CD8-positive, alpha-beta memory T cell (primary cell): ENCODE measurements at regions of chr11 and their contacts with region 1.

Region 1: GRCh38 chr11:587978-588380 is 11.7 kb downstream of the PHRF1 start:
- DNase-seq: peak; percentile 55 to 88 (median 81)
- H3K4me3 ChIP-seq: no peak overlapping the region
- H3K4me3 Mint-ChIP-seq: peak overlapping the region; percentile 60 to 89 (median 80)
- H3K27ac ChIP-seq: peak overlapping the region; percentile 46
- H3K27ac Mint-ChIP-seq: peak overlapping the region; percentile 97 to 100 (median 100)
- H3K4me1 ChIP-seq: peaks cover 22% of the 10 kb centered on the region
- H3K4me1 Mint-ChIP-seq: peaks cover 21 to 38% (median 32%) of the 10 kb centered on the region in 3 donors
- H3K27me3 ChIP-seq: no peaks in the 10 kb centered on the region
- H3K27me3 Mint-ChIP-seq: no peaks in the 10 kb centered on the region

Region 2: DNA sequence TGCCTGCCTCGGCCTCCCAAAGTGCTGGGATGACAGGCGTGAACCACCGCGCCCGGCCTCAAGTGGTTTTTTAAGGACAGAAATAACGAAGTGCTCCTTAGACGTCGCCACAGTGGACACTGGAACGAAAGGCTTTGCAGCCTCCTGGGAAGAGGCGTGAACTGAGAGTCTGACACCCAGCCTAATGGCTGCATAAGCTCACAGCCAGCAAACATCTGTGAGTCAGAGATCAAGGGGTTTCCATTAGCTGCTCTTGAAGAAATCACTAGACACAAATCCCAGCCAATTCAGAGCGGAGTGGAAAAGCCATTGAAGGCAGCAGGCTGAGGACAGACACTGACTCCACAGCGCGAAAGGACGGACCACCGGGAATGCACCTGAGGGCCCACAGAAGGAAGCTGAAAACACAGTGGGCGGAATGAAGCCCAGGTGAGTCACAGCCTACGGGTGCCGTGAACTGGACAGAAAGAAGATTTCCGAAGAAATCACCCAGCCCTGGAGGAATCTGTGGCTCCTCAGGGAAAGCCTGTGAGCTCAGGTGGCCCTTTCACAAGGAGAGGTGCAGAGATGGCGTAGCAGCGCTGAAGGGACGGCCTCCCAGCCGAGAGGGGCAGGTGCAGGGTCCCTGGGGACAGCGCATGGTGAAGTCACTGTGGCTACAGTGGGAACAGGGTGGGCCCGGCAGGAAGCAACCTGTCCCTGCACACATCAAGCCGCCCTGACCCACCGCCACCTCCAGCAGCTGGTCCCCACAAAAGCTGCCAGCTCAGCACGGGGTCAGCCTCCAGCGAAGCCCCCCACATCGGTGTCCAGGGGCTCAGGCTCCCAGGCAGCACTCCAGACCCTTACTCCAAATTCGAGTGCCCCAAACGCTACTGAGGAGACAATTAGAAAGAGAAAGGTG is 39.0 kb before region 1 on chr11:
- CTCF ChIA-PET with region 1: no interaction called
- POLR2A ChIA-PET with region 1: no interaction called
- DNase-seq: peak in 1 of 5 donors; percentile 42
- H3K4me3 ChIP-seq: no peak overlapping the region
- H3K4me3 Mint-ChIP-seq: no peak overlapping the region
- H3K27ac ChIP-seq: no peak overlapping the region
- H3K27ac Mint-ChIP-seq: no peak overlapping the region
- H3K4me1 ChIP-seq: peaks cover 3% of the 10 kb centered on the region
- H3K4me1 Mint-ChIP-seq: no peaks in the 10 kb centered on the region
- H3K27me3 ChIP-seq: no peaks in the 10 kb centered on the region
- H3K27me3 Mint-ChIP-seq: no peaks in the 10 kb centered on the region

Region 3: DNA sequence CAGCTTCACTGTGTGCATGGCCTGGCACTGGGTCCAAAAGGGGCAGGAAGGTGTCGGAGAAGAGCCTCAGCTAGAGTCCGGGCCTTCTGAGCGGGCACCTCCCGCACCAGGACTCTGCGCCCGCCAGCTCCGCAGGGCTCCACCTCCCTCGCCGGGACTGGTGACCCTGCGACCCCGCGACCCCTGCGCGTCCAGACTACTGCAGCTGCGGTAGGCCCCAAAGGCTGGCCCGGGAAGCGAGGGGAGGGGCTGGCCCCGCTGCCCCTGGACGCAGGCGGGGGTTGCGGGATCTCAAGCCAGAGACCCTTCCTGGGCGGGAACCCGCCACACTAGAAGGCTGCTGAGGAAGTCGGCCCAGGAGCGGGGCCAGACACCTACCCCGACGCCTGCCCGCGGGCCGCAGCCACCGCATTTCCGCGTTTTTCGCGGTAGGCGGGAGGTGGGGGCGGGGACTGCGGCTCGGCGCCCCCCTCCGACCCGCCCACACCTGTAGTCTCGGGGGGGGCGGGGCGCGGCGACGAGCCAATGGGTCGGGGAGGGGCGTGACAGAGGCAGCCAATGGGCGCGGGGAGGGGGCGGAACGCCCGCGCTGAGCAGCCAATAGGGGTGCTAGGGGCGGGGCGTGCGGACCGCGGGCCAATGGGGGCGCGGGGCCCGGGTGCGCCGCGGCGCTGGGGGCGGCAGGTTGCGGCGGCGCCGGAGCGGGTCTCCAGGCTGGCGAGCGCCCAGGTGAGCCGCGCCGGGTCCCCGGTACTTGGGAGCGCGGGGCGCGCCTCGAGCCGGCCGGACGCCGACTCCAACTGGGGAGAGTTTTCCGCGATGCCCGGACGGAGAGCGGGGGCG is 27.5 kb before region 1 on chr11 and contains the starts of genes LMNTD2 and RASSF7:
- CTCF ChIA-PET with region 1: interaction called, 4 read pairs
- POLR2A ChIA-PET with region 1: interaction called, 10 read pairs
- DNase-seq: peak; percentile 90 to 96 (median 92)
- H3K4me3 ChIP-seq: peak within 1 kb of the TSS; percentile 76
- H3K4me3 Mint-ChIP-seq: peak within 1 kb of the TSS; percentile 86 to 93 (median 90)
- H3K27ac ChIP-seq: peak within 1 kb of the TSS; percentile 74
- H3K27ac Mint-ChIP-seq: peak within 1 kb of the TSS; percentile 79 to 94 (median 86)
- H3K4me1 ChIP-seq: peaks cover 18% of the 10 kb centered on the region
- H3K4me1 Mint-ChIP-seq: peaks cover 10 to 27% (median 10%) of the 10 kb centered on the region in 3 donors
- H3K27me3 ChIP-seq: no peaks in the 10 kb centered on the region
- H3K27me3 Mint-ChIP-seq: peaks cover 0 to 3% of the 10 kb centered on the region in 2 donors
- total RNA-seq, gene LMNTD2: 1.2 to 2.4 TPM
- total RNA-seq, gene RASSF7: 20.4 to 20.7 TPM